ENCODE measurements at regions of chr3 and their contacts with region 1.

Region 1: DNA sequence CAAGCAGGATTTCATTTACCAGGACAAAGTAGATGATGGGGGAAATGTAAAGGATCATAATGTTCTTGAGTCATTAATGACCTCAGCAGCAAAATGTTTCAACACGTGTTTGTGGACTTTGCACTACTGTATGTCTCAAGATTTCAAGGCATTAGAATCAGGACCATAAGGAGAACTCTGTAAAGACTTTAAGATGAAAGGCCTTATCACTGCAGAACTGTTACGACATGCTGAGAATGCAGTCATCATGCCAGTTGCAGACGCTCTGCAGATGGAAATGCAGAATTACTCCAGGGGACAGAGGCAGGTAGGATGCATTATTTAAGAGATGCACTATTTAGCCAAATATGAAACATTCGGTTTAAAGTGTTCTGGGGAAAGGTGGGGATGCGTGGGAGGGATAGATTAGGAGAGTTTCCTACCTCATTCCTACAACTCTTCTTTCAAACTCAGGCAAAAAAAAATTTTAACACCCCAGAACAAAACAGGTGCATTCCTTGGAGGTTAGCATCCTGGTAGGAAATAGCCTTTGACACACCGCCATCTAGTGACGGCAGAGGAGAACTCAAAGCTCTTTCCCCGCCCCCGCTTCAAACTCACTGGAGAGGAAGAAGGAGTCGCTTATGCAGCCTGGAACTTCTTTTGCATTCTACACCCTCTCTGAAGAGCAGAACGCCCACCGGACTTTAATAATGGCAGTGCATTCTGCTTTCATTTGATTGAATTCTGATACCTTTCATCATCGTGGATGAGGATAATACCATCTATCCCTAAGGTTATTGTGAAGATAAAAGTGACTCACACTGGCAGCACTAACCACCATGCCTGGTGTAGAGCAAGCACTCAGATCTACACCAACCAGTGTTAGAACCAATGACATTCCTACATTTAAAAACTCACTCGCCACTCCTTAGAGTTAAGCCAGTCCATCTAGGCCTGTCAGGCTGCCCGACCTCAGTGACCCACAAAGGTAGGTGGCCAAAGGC is 43.1 kb upstream of the TOPAZ1 start:
- DNase-seq: peak in 4 of 5 donors; percentile 75 to 94 (median 86)
- H3K4me3 ChIP-seq: no peak overlapping the region
- H3K27ac ChIP-seq: no peak overlapping the region
- H3K4me1 ChIP-seq: no peaks in the 10 kb centered on the region
- H3K27me3 ChIP-seq: no peaks in the 10 kb centered on the region
- CTCF ChIP-seq: peak; percentile 86

Region 2: DNA sequence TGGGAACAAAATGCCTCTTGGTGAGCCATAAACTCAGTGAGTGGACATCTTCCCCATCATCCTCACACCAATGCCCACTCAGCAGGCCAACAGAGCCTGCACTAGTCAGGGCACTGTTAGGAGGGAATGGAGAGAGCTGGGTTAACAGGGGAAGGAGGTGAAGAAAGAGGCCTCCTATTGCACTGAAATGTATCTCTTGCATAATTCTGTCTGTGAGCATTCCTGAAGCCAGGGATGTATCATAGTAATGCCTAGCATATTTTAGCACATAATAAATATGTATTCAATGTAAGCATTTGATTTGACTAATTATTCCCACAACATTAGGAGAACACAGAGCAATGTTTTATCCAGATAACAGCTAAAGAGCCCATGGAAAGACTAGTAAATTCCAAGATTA is 658.0 kb before region 1 on chr3:
- intact Hi-C with region 1: loop called (anchors 10 kb)
- DNase-seq: no peak
- H3K4me3 ChIP-seq: no peak overlapping the region
- H3K27ac ChIP-seq: no peak overlapping the region
- H3K4me1 ChIP-seq: no peaks in the 10 kb centered on the region
- H3K27me3 ChIP-seq: no peaks in the 10 kb centered on the region
- CTCF ChIP-seq: no peak